Dendritic cell treated with granulocyte-macrophage colony-stimulating factor and Interleukin-4, amounts not matched to agents 40 ng/mL and 50 ng/mL, for 4 days (primary cell): ENCODE measurements at regions of chr12 and their contacts with region 1.

Region 1: GRCh38 chr12:32482226-32482625 is 82.9 kb downstream of the FGD4 start:
- H3K4me3 Mint-ChIP-seq: peak overlapping the region; percentile 44
- H3K27ac Mint-ChIP-seq: peak overlapping the region; percentile 94
- H3K4me1 Mint-ChIP-seq: peaks cover 63% of the 10 kb centered on the region
- H3K27me3 Mint-ChIP-seq: no peaks in the 10 kb centered on the region

Region 2: GRCh38 chr12:31702047-31702446 is 780.2 kb before region 1 on chr12:
- intact Hi-C with region 1: no loop called
- H3K4me3 Mint-ChIP-seq: no peak overlapping the region
- H3K27ac Mint-ChIP-seq: no peak overlapping the region
- H3K4me1 Mint-ChIP-seq: no peaks in the 10 kb centered on the region
- H3K27me3 Mint-ChIP-seq: no peaks in the 10 kb centered on the region

Region 3: GRCh38 chr12:32522331-32523221 is 40.4 kb after region 1 on chr12:
- intact Hi-C with region 1: loop called (anchors 2 kb)
- H3K4me3 Mint-ChIP-seq: peak overlapping the region; percentile 49
- H3K27ac Mint-ChIP-seq: peak overlapping the region; percentile 89
- H3K4me1 Mint-ChIP-seq: peaks cover 42% of the 10 kb centered on the region
- H3K27me3 Mint-ChIP-seq: no peaks in the 10 kb centered on the region